ENCODE measurements at regions of chr18 and their contacts with region 1.

Region 1: DNA sequence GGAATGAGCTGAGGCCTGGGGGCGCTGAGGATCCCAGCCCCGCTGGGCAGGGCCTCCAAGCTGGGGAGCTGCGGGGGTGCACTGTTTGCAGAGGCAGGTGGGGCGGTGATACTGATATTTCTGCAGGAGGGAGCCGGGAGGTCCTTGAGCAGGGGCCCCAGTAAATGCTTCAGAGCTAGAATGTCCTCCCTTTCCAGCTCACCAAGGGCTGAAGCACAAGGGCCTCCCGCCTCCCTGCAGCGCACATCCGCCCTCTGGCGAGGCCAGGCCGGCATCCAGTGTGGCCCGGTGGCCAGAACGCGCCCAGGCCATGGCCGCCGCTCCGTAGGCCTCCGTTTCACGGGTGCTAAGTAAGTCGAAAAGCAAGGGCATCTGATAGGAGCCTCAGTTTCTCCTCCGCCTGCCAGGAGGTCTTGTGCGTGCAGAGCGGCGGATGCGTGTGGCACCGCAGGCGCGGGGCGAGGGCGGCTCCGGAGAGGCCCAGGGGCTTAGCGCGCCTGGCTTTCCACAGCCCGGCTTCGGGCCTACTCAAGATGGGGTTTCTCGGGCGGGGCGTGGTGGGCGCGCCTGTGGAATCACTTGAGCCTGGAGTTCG is 29.5 kb upstream of the CHMP1B start:
- DNase-seq: no peak
- ATAC-seq: no peak

Region 2: GRCh38 chr18:12233378-12233777 is 411.6 kb after region 1 on chr18:
- intact Hi-C with region 1: loop called (anchors 5 kb)
- DNase-seq: no peak
- ATAC-seq: no peak